Right ventricle myocardium inferior (tissue), 1 donor: ENCODE measurements at regions of chr15 and their contacts with region 1.

Region 1: DNA sequence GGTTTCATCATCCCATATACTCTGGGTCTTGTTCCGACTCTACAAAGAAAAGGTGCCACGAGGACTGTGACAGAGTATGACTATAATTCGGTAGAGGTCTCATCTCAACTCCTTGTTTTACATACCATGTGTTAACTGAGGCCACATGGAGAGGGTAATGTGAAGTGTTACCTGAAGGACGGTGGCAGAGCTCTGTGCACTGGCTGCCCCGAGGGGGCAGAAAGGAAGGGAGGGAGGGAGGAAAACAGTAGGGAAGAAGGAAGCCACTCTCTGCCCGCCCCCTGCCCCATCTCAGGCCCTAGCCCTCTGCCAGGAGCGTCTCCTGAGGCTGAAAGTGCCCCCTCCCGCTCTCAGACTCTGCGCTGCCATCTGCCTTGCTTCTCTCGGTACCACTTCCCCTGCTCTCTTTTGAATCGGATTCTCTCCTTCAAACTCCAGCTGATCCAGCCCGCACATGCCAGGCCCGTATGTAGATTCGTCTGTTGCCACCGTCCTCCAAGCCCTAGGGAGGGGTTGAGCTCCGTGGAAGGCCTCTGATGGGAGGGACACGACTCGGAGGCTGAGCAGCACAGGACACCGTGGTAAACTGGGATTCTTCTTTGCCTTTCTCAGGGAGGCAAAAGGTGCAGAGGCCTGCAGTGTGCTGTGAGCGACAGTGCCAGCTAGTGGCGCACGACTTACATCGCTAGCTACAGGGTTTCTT is 70.5 kb upstream of the ATP10A start:
- DNase-seq: no peak
- ATAC-seq: peak; percentile 88

Region 2: GRCh38 chr15:25693321-25694237 is 240.0 kb before region 1 on chr15:
- intact Hi-C with region 1: loop called (anchors 10 kb)
- DNase-seq: no peak
- ATAC-seq: peak; percentile 65

Region 3: DNA sequence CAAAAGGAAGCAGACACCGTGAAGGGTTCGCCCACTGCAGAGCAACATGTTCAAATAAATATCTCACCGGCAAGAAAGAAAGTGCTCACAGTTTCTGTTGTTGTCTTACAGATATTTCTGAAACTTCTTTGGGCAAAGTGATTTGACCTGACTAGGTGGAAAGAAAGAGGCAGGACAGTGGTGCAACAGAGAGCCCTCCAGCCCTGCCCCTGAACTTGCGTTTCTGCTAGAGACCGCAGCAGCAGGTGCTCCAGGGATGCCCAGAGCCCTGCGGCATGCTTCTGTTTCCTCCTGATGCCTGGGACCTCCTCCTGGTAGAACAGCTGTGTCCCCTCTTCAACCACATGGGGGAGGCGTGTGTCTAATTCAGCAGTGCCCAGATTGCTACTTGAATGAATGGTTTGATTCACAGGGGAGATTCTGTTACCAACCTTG is 193.9 kb before region 1 on chr15:
- intact Hi-C with region 1: loop called (anchors 5 kb)
- DNase-seq: no peak
- ATAC-seq: no peak

Region 4: DNA sequence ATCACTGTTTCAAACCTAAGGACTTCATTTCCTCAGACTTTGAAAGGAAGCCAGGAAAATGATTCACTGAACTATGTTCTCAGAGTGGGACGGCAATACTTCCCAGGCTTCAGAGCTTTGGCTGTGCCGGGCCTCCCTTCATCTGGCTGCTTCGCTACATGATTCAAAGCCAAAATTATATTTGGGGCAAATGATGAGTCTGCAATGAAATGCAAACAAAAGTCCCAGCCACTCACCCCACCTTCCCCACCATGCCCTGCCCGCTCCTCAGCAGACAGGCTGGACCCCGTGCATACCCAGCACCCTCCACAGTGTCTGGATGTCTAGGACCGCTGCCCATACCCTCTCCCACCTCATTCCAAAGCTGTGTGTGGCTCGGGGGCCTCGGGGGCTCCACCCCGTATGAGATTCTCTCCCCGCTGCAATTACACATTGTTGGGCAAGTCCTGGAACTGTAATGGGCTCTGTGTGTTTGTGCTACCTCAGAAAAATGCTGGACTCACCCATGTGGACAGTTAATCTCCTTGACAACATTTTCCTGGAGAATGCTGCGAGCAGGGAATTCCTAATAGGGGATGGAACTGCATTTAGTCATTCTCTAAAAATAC is 102.7 kb before region 1 on chr15:
- intact Hi-C with region 1: no loop called
- DNase-seq: no peak
- ATAC-seq: peak; percentile 86